Activated CD8-positive, alpha-beta T cell treated with anti-CD3 and anti-CD28 coated beads for 36 hours (primary cell): ENCODE measurements at regions of chr10 and their contacts with region 1.

Region 1: GRCh38 chr10:86376852-86377796 is 10.5 kb upstream of the GRID1 start:
- DNase-seq: peak; percentile 79
- ATAC-seq: peak; percentile 96
- H3K4me3 Mint-ChIP-seq: no peak overlapping the region
- H3K27ac Mint-ChIP-seq: no peak overlapping the region
- H3K4me1 Mint-ChIP-seq: no peaks in the 10 kb centered on the region
- H3K27me3 Mint-ChIP-seq: peaks cover 18% of the 10 kb centered on the region
- CTCF ChIP-seq: peak; percentile 98

Region 2: GRCh38 chr10:86100581-86101061 is 276.5 kb before region 1 on chr10:
- CTCF ChIA-PET with region 1: interaction called, 3 read pairs
- POLR2A ChIA-PET with region 1: no interaction called
- intact Hi-C with region 1: loop called (anchors 5 kb)
- DNase-seq: peak; percentile 15
- ATAC-seq: peak; percentile 78
- H3K4me3 Mint-ChIP-seq: no peak overlapping the region
- H3K27ac Mint-ChIP-seq: no peak overlapping the region
- H3K4me1 Mint-ChIP-seq: no peaks in the 10 kb centered on the region
- H3K27me3 Mint-ChIP-seq: no peaks in the 10 kb centered on the region
- CTCF ChIP-seq: peak; percentile 54

Region 3: GRCh38 chr10:86178401-86179152 is 198.5 kb before region 1 on chr10:
- CTCF ChIA-PET with region 1: no interaction called
- POLR2A ChIA-PET with region 1: no interaction called
- intact Hi-C with region 1: no loop called
- DNase-seq: peak; percentile 5
- ATAC-seq: no peak
- H3K4me3 Mint-ChIP-seq: no peak overlapping the region
- H3K27ac Mint-ChIP-seq: no peak overlapping the region
- H3K4me1 Mint-ChIP-seq: no peaks in the 10 kb centered on the region
- H3K27me3 Mint-ChIP-seq: no peaks in the 10 kb centered on the region
- CTCF ChIP-seq: no peak

Region 4: GRCh38 chr10:86261941-86262687 is 115.0 kb before region 1 on chr10:
- CTCF ChIA-PET with region 1: no interaction called
- POLR2A ChIA-PET with region 1: no interaction called
- intact Hi-C with region 1: loop called (anchors 5 kb)
- DNase-seq: peak; percentile 38
- ATAC-seq: peak; percentile 70
- H3K4me3 Mint-ChIP-seq: no peak overlapping the region
- H3K27ac Mint-ChIP-seq: no peak overlapping the region
- H3K4me1 Mint-ChIP-seq: no peaks in the 10 kb centered on the region
- H3K27me3 Mint-ChIP-seq: peaks cover 14% of the 10 kb centered on the region
- CTCF ChIP-seq: no peak

Region 5: DNA sequence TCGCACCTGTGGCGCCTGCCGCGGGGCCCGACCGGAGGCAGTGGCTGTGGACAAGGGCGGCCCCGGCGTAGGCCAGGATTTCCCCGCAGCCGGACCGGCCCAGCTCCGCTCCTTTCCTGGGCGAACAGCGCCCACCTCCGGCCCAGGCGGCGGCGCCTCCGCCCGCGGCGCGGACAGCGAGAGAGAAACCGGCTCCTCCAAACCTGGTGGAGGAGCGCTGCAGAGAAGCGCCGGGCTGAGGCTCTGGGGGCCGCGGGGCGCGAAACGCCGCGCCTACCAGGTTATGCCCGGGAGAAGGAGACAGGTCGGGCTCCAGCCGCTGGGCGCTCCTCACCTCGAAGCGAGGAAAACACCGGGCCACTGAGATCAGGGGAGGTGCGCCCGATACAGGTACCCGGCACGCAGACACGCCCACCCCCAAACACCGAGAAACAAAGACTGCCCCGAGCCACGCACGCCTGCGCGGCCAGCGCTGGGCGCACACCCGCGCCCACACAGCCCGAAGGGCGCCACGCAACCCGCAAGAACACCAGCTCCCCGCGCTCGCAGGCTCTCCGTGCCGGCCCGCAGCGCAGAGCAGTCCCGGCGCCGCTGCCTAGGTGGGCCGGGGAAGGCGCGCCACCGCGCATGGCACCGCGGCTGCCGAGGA is 13.8 kb before region 1 on chr10:
- CTCF ChIA-PET with region 1: interaction called, 15 read pairs
- POLR2A ChIA-PET with region 1: no interaction called
- intact Hi-C with region 1: no loop called
- DNase-seq: peak; percentile 28
- ATAC-seq: peak; percentile 24
- H3K4me3 Mint-ChIP-seq: no peak overlapping the region
- H3K27ac Mint-ChIP-seq: no peak overlapping the region
- H3K4me1 Mint-ChIP-seq: peaks cover 12% of the 10 kb centered on the region
- H3K27me3 Mint-ChIP-seq: peaks cover 44% of the 10 kb centered on the region
- CTCF ChIP-seq: no peak

Region 6: DNA sequence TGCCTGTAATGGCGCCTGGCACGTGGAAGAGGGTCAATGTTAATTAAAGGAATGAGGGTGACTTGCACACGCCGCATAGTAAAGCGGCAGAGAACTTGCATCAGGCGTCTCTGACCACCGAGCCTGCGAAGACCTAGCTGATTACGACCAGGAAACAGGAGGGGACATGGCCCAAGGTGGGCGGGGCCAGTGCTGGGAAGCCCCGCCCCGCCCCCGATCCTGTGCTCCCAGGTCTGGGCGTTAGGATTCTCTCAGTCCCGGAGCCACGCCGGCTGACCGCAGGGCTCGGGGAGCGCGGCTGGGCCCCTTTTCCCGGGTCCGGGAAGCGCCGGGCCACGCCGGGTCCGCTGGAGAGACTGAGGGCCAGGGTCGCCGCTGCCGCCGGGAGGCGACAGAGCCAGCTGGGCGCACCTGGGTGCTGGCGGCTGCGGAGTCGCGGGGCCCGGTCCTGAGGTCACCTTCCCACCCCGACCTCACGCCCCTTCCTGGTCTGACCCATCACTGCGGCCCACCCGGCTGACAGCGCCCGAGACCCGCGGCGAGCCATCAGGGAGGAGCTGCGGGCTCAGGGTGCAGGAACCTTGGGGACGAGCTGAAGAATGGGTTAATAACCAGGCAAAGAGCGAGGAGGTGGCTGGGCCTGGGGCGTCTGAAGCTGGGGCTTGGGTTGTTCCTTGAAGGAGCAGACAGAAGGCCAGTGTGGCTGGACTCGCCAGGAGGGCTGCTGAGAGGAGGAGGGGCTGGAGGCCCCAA is 12.5 kb after region 1 on chr10:
- CTCF ChIA-PET with region 1: interaction called, 11 read pairs
- POLR2A ChIA-PET with region 1: no interaction called
- intact Hi-C with region 1: no loop called
- DNase-seq: peak; percentile 43
- ATAC-seq: peak; percentile 84
- H3K4me3 Mint-ChIP-seq: peak overlapping the region; percentile 71
- H3K27ac Mint-ChIP-seq: peak overlapping the region; percentile 50
- H3K4me1 Mint-ChIP-seq: peaks cover 2% of the 10 kb centered on the region
- H3K27me3 Mint-ChIP-seq: peaks cover 19% of the 10 kb centered on the region
- CTCF ChIP-seq: no peak